Endothelial cell of umbilical vein (primary cell): ENCODE measurements at regions of chr6 and their contacts with region 1.

Region 1: DNA sequence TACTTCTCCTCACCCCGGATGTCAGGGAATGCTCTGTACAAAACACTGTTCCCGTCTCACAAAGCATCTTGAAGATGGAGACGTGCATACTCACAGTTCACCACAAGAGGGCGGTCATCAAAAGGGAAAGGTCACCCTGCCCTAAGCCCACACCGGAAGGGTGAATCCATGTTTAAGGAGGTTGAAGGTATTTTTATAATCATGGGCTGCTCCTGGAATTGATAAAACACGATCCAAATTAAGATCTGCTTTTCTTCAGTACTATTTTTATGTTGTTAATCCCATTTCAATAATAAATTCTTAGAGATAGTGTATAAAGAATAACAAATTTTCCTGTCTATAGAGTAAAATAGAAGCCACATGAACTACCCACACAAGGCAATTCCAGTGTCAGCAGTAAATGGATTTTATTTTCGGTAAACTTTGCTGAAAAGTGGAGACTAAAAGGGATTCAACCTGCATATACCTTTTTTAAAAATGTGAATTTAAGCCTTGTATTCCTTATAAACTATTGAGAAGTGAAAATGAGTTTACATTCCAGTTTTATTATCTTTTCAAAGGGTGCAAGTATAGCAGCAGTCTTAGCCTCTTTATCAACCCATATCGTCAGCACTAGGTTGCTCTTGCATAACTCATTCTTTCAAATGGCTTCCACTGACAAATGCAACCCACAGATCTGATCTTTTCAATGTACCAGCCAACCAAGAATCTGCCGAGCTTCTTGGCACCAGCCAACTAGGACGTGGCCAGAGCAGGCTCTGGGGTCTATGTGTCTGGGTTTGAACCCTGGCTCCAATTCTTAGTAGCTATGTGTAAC is 79.7 kb upstream of the MBOAT1 start:
- DNase-seq: peak; percentile 78
- H3K4me3 ChIP-seq: no peak overlapping the region
- H3K27ac ChIP-seq: no peak overlapping the region
- H3K4me1 ChIP-seq: no peaks in the 10 kb centered on the region
- H3K27me3 ChIP-seq: peaks cover under 1 to 2% of the 10 kb centered on the region in 2 experiments
- CTCF ChIP-seq: peak; percentile 79 to 82
- POLR2A ChIP-seq: no peak

Region 2: DNA sequence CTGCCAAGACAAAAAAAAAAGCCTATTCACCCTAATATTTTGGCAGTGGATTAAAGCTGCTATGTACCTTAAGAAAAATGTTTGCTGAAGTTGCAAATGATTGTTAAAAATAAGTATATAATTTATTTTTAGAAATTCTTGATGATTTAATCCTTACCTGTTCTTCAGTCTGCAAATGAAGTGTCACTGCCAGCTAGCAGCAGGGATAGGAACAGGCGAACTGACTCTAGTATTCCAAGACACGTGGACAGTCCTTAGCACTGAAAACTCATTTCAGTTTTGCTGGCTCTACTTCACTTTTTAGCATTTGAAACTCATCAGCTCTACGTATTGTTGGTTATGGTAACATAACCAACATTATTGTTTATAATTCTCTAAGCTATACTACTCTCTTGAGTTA is 659.2 kb before region 1 on chr6:
- CTCF ChIA-PET with region 1: no interaction called
- POLR2A ChIA-PET with region 1: no interaction called
- dilution Hi-C with region 1: no loop called
- intact Hi-C with region 1: no loop called
- DNase-seq: no peak
- H3K4me3 ChIP-seq: no peak overlapping the region
- H3K27ac ChIP-seq: no peak overlapping the region
- H3K4me1 ChIP-seq: no peaks in the 10 kb centered on the region
- H3K27me3 ChIP-seq: no peaks in the 10 kb centered on the region
- CTCF ChIP-seq: no peak
- POLR2A ChIP-seq: no peak

Region 3: GRCh38 chr6:20092071-20092566 is 199.9 kb before region 1 on chr6:
- CTCF ChIA-PET with region 1: interaction called, 3 read pairs
- POLR2A ChIA-PET with region 1: no interaction called
- dilution Hi-C with region 1: no loop called
- intact Hi-C with region 1: loop called (anchors 1 kb)
- DNase-seq: peak; percentile 65
- H3K4me3 ChIP-seq: no peak overlapping the region
- H3K27ac ChIP-seq: no peak overlapping the region
- H3K4me1 ChIP-seq: no peaks in the 10 kb centered on the region
- H3K27me3 ChIP-seq: no peaks in the 10 kb centered on the region
- CTCF ChIP-seq: peak; percentile 29 to 44
- POLR2A ChIP-seq: no peak

Region 4: GRCh38 chr6:20212392-20213217 is 79.4 kb before region 1 on chr6 and contains the start of gene MBOAT1:
- CTCF ChIA-PET with region 1: no interaction called
- POLR2A ChIA-PET with region 1: no interaction called
- dilution Hi-C with region 1: no loop called
- intact Hi-C with region 1: loop called (anchors 2 kb)
- DNase-seq: peak; percentile 92
- H3K4me3 ChIP-seq: peak within 1 kb of the TSS; percentile 21 to 80 (median 58)
- H3K27ac ChIP-seq: peak within 1 kb of the TSS; percentile 55
- H3K4me1 ChIP-seq: peaks cover 15% of the 10 kb centered on the region
- H3K27me3 ChIP-seq: no peaks in the 10 kb centered on the region
- CTCF ChIP-seq: peak in 1 of 2 donors; percentile 22
- POLR2A ChIP-seq: peak; percentile 72
- total RNA-seq, gene MBOAT1: 4.8 and 5.4 TPM in 2 replicates

Region 5: DNA sequence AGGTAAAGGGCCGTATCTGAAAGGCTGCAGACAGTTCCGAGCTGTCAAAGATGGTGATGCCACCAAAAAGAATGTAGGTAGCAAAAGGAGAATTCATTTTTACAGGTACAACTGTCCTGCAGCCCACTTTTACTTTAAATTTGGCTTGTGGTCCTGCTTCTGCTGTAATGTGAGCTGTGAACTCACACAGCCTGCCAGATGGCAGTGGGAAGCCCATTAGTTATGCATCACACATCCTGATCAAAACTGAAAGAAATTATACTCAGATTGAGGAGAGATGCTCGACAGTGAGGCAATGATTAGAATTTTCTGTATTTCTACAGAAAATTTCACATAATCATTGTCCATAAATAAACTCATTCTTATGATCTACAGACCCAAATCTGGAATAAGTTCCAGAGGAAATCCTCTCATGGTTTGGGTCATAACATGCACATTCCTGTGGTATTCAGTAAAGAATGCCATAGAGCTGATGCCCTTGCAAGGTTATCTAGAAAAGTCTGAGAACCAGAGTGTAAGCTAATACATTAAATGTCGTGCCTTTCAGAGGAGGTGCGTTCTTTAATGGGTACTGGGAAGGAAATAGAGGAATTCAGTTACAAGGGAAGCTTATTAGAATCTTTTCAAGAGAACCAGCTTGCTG is 85.8 kb after region 1 on chr6:
- CTCF ChIA-PET with region 1: interaction called, 8 read pairs
- POLR2A ChIA-PET with region 1: no interaction called
- dilution Hi-C with region 1: no loop called
- intact Hi-C with region 1: loop called (anchors 5 kb)
- DNase-seq: peak; percentile 88
- H3K4me3 ChIP-seq: peak overlapping the region in 1 of 3 experiments; percentile 3
- H3K27ac ChIP-seq: peak overlapping the region; percentile 68
- H3K4me1 ChIP-seq: peaks cover 32% of the 10 kb centered on the region
- H3K27me3 ChIP-seq: no peaks in the 10 kb centered on the region
- CTCF ChIP-seq: no peak
- POLR2A ChIP-seq: no peak

Region 6: GRCh38 chr6:20534295-20535262 is 242.6 kb after region 1 on chr6 and contains the start of gene CDKAL1:
- CTCF ChIA-PET with region 1: interaction called, 22 read pairs
- POLR2A ChIA-PET with region 1: no interaction called
- dilution Hi-C with region 1: no loop called
- intact Hi-C with region 1: no loop called
- DNase-seq: peak; percentile 94
- H3K4me3 ChIP-seq: peak within 1 kb of the TSS; percentile 75 to 99 (median 90)
- H3K27ac ChIP-seq: peak within 1 kb of the TSS; percentile 77
- H3K4me1 ChIP-seq: peaks cover 10% of the 10 kb centered on the region
- H3K27me3 ChIP-seq: no peaks in the 10 kb centered on the region
- CTCF ChIP-seq: no peak
- POLR2A ChIP-seq: peak; percentile 89
- total RNA-seq, gene CDKAL1: 17.3 and 20.5 TPM in 2 replicates